Activated naive CD4-positive, alpha-beta T cell treated with anti-CD3 and anti-CD28 coated beads for 36 hours (primary cell): ENCODE measurements at regions of chr14 and their contacts with region 1.

Region 1: DNA sequence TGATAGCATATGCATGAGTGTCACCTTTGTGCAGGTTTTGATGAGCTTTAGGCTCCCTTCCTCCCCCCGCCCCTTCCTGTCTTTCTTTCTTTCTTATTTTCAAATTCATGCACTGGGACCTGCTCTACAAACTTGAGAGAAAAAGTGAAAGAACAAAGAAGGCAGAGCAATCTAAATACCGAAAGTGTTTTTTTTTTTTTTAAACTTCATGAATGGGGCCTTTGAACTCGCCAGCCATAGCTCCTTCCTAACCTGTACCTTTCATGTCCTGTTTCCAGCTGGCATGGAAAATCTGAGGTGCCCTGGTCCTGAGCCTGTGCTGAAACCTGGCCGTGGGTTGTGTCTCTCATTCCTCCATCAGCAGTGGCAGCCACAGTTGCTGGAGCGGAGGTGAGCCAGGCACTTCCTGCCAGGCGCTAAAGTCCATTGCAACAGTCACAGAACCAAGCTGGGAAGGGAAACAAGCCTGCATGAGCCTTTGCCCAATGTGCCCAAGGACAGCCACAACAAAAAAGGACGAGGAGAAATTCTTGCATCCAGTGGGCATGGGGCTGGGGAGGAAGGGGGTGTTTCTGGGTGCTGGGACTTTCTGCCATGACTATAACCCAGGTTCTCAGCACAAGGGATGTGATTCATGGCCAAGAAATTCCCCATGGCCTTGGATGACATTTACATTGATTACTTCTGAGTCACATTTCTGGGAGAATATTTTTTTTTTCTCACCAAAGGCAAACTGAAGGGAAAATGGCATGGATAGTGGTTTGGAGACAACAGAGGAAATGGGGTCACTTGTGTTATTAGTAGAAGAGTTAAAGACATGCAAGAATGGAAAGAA is 102.7 kb downstream of the TMEM30B start:
- DNase-seq: peak; percentile 78
- H3K4me3 Mint-ChIP-seq: peak overlapping the region; percentile 41
- H3K27ac Mint-ChIP-seq: peak overlapping the region; percentile 94
- H3K4me1 Mint-ChIP-seq: peaks cover 57% of the 10 kb centered on the region
- H3K27me3 Mint-ChIP-seq: peaks cover 6% of the 10 kb centered on the region

Region 2: DNA sequence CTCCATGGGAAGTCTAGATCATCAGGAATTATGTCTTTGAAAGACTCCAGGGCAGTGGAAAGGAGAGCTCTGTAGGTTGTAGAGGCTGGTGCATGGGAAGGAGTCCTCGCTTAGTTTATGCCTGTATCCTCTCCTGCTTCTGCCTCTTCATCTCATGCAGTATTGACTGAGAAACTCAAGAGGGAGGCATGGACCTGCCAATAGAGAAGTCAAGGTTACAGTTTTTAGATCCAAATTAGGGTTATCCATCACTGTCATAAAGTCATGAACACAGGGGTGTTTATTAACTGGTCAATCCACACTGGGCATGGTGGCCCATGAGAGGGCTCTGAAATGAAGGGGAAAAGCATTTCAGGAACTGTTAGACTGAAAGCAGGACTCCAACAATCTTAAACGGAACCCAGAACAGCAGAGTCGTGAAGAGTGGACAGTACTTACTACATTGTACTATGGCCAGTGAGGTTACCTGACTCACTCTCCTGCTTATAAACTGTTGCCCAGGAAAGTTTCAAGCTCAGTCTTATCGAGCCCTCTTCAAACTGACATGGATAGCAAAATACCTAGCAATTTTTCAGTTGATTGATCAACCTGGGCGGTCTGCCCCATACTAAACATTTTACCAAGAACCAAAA is 983.1 kb before region 1 on chr14:
- CTCF ChIA-PET with region 1: no interaction called
- intact Hi-C with region 1: loop called (anchors 5 kb)
- DNase-seq: no peak
- H3K4me3 Mint-ChIP-seq: no peak overlapping the region
- H3K27ac Mint-ChIP-seq: no peak overlapping the region
- H3K4me1 Mint-ChIP-seq: peaks cover 11% of the 10 kb centered on the region
- H3K27me3 Mint-ChIP-seq: peaks cover 10% of the 10 kb centered on the region

Region 3: GRCh38 chr14:60553808-60554207 is 624.6 kb before region 1 on chr14:
- CTCF ChIA-PET with region 1: no interaction called
- intact Hi-C with region 1: no loop called
- DNase-seq: no peak
- H3K4me3 Mint-ChIP-seq: no peak overlapping the region
- H3K27ac Mint-ChIP-seq: no peak overlapping the region
- H3K4me1 Mint-ChIP-seq: no peaks in the 10 kb centered on the region
- H3K27me3 Mint-ChIP-seq: peaks cover 22% of the 10 kb centered on the region

Region 4: DNA sequence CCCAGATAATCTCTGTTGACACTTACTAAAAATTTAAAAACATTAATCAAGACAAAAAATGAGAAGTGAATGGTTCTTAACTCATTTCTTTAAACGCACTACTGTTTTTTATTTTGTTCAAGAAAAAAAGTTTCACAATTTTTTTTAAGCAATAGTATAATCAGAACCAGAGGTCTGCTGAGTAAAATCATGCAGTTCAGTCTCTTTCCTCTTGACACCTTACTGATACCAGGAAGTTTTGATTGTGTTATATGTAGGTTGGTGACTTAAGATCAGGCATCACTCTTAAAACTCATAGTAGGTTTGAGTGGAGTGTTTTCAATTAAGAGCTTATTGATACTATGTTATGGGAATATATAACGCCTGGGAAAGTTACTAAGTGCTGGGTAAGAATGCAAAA is 318.9 kb before region 1 on chr14:
- CTCF ChIA-PET with region 1: no interaction called
- intact Hi-C with region 1: loop called (anchors 5 kb)
- DNase-seq: no peak
- H3K4me3 Mint-ChIP-seq: no peak overlapping the region
- H3K27ac Mint-ChIP-seq: no peak overlapping the region
- H3K4me1 Mint-ChIP-seq: peaks cover 14% of the 10 kb centered on the region
- H3K27me3 Mint-ChIP-seq: no peaks in the 10 kb centered on the region

Region 5: GRCh38 chr14:61132894-61133293 is 45.5 kb before region 1 on chr14:
- CTCF ChIA-PET with region 1: no interaction called
- intact Hi-C with region 1: loop called (anchors 1 kb)
- DNase-seq: no peak
- H3K4me3 Mint-ChIP-seq: no peak overlapping the region
- H3K27ac Mint-ChIP-seq: no peak overlapping the region
- H3K4me1 Mint-ChIP-seq: peaks cover 2% of the 10 kb centered on the region
- H3K27me3 Mint-ChIP-seq: peaks cover 14% of the 10 kb centered on the region

Region 6: DNA sequence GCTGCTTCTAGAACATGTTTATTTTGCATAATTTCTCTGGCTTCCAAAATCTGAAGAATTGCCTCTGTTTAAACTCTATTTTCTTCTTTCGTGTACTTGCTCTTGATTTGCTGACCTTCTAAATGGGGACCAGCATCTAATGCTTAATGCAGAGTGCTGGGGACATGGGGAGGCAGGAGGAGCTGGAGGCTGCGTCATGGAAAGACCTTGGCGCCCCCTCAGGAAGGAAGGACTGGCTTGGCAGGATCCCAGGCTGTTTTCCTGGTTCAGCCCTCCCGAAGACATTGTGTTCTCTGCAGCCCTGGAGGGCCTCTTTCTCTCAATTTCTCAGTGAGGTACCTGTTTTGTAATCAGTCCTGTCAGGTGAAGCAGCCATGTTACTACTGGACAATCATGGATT is 148.4 kb after region 1 on chr14:
- CTCF ChIA-PET with region 1: no interaction called
- intact Hi-C with region 1: loop called (anchors 2 kb)
- DNase-seq: no peak
- H3K4me3 Mint-ChIP-seq: peak overlapping the region; percentile 63
- H3K27ac Mint-ChIP-seq: peak overlapping the region; percentile 95
- H3K4me1 Mint-ChIP-seq: peaks cover 70% of the 10 kb centered on the region
- H3K27me3 Mint-ChIP-seq: no peaks in the 10 kb centered on the region

Region 7: DNA sequence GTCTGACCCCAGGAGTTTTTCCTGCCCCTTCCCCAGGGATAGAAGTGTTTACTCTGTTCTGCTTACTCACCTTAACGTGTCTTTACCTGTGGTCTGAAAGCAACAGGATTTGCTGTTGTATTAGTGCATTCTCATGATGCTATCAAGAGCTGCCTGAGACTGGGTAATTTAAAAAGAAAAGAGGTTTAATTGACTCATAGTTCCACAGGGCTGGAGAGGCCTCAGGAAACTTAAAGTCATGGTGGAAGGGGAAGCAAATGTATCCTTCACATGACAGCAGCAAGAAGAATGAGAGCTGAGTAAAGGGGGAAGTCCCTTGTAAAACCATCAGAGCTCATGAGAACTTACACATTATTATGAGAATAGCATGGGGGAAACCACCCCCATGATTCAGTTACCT is 824.2 kb after region 1 on chr14:
- CTCF ChIA-PET with region 1: no interaction called
- intact Hi-C with region 1: loop called (anchors 2 kb)
- DNase-seq: peak; percentile 47
- H3K4me3 Mint-ChIP-seq: no peak overlapping the region
- H3K27ac Mint-ChIP-seq: no peak overlapping the region
- H3K4me1 Mint-ChIP-seq: peaks cover 13% of the 10 kb centered on the region
- H3K27me3 Mint-ChIP-seq: peaks cover 17% of the 10 kb centered on the region